ENCODE measurements at regions of chr5 and their contacts with region 1.

Region 1: DNA sequence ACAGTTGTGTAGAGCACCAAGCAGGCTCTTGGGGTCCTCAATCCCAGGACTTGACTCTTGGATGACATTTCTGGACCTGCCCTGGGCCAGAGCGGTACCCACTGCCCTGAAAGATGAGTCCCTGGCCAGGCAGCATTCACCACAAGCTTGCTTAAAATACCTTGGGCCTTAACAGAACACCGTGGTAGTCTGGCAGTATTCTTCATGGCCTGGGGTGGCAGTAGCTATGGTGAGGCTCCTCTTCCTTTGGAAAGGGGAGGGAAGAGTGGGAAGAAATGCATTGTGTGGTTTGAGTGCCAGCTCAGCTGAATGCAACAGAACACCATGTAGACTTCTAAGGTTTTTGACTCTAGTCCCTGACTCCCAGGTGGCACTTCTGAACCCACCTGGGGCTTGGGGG is 29.4 kb upstream of the IRGM start:
- DNase-seq: no peak
- H3K4me3 Mint-ChIP-seq: no peak overlapping the region
- H3K27ac Mint-ChIP-seq: no peak overlapping the region
- H3K4me1 Mint-ChIP-seq: no peaks in the 10 kb centered on the region
- H3K27me3 Mint-ChIP-seq: no peaks in the 10 kb centered on the region

Region 2: GRCh38 chr5:150486402-150487198 is 330.3 kb before region 1 on chr5:
- CTCF ChIA-PET with region 1: no interaction called
- intact Hi-C with region 1: no loop called
- DNase-seq: peak; percentile 42
- H3K4me3 Mint-ChIP-seq: peak overlapping the region; percentile 57
- H3K27ac Mint-ChIP-seq: no peak overlapping the region
- H3K4me1 Mint-ChIP-seq: peaks cover 7% of the 10 kb centered on the region
- H3K27me3 Mint-ChIP-seq: peaks cover 3% of the 10 kb centered on the region

Region 3: DNA sequence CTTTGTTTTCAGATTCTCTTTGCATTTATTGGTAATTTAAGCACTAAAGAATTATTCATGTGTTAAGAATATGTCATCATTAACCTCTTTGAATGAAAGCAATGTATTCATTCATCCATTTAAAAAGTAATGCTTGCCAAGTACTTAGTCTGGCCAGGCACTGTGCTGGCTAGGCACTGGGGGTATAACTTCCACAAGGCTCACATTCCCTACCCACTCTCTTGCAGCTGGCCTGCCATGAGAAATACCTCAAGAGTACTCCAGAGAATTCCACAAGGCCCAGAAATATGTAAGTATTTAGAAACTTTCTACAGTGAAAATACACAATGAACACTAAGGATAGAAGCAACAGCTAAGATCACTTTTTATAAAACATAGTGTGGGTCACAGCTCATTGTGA is 62.4 kb after region 1 on chr5:
- CTCF ChIA-PET with region 1: no interaction called
- intact Hi-C with region 1: loop called (anchors 2 kb)
- DNase-seq: no peak
- H3K4me3 Mint-ChIP-seq: no peak overlapping the region
- H3K27ac Mint-ChIP-seq: no peak overlapping the region
- H3K4me1 Mint-ChIP-seq: no peaks in the 10 kb centered on the region
- H3K27me3 Mint-ChIP-seq: no peaks in the 10 kb centered on the region